Cardiac septum (tissue), 1 donor: ENCODE measurements at regions of chr22 and their contacts with region 1.

Region 1: GRCh38 chr22:25777870-25778269 is 35.9 kb downstream of the MYO18B start:
- DNase-seq: no peak

Region 2: DNA sequence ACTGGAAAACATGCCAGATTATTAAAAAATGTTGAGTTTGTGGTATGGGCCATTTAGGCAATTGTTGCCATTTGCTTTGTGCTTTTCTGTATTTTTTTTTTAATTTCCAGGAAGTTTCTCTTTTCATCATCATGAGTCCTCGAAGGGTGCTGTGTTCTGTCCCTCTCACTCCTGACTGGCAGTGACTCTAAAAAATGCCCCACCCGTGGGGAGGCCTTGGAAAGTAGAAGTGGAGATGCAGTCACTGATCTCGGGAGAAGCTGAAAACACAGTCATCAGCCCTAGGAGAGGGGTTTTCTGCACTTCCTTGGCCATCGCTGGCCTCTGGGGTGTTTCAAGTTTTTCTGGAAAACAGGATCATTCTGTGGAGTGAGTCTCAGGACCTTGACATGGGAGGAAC is 311.9 kb before region 1 on chr22:
- intact Hi-C with region 1: loop called (anchors 2 kb)
- DNase-seq: no peak

Region 3: DNA sequence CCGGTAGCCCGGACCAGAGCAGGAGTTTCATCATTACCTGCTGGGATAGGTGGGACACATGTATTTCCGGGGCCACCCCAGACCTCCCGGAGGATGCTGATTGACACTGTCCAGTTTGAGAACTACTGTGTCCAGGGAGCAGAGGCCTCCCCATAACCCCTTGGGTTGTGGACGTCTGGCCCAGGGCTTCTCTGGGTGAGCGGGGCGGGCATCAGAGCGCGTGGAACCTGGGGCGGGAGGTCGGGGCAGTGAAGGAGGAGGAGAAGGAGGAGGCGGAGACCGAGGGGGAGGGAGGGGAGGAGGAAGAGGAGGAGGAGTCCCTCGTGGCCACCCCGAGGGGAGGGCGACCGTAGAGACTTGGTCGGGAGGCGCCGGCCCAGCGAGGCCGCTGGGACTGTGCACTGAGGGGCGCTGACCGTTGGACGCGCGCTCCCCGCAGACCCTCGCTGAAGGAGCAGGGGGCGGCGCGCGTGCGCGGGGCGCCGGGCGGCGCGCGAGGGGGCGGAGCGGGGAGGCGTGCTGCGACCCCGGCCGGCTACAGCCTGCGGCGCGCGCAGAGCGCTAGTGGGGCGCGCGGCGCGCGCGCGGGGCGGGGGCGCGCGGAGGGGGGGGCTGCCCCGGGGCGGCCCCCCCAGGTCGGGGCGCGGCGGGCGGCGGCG is 213.4 kb before region 1 on chr22 and contains the start of gene GRK3:
- intact Hi-C with region 1: loop called (anchors 10 kb)
- DNase-seq: peak; percentile 83
- total RNA-seq, gene GRK3: 4.8 TPM

Region 4: DNA sequence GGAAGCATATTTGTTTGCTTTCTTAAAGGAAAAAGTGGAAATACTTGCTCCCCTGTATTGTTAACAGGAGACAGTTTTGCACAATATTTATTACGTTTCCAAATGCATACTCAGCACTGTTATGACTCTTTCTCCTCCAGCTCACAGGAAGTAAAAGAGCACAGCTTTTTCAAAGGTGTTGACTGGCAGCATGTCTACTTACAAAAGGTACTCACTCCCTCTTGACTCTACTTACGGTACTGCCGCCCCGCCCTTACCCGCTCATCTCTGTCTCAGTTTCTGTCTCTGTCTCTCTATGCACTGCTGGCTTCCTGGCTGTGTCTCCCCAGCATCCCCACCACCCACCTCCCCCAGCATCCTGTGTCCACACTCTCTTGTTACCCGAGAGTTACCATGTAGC is 68.1 kb before region 1 on chr22:
- intact Hi-C with region 1: loop called (anchors 5 kb)
- DNase-seq: no peak

Region 5: GRCh38 chr22:25741692-25742626 is 35.9 kb before region 1 on chr22 and contains the start of gene MYO18B:
- intact Hi-C with region 1: no loop called
- DNase-seq: peak; percentile 90
- total RNA-seq, gene MYO18B: 254 TPM